GM12878 (cell line): ENCODE measurements at regions of chr3 and their contacts with region 1.

Region 1: GRCh38 chr3:23239211-23240068 is 36.3 kb downstream of the UBE2E2 start:
- DNase-seq: no peak
- ATAC-seq: no peak
- H3K4me3 ChIP-seq: no peak overlapping the region
- H3K27ac ChIP-seq: no peak overlapping the region
- H3K4me1 ChIP-seq: no peaks in the 10 kb centered on the region
- H3K27me3 ChIP-seq: no peaks in the 10 kb centered on the region
- CTCF ChIP-seq: no peak
- EP300 ChIP-seq: no peak
- POLR2A ChIP-seq: no peak
- RAD21 ChIP-seq: no peak

Region 2: DNA sequence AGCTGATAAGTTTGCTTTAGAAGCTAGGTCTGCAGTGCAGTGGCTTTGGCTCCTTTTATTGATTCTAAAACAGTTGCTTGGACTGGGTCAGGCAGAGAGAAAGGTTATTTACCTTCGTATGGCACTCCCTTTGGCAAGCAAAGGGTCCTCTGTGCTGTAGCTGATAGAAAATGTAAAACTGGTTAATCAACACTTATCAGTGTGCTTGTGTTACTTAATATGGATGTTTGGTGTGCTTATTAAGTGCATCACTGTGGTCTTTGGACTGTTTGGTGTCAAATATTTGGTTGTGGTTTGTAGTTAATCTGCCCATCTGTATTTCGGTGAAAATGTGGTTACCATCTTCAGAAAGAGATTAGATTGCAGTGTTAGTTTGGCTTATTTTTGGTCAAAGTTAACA is 20.3 kb before region 1 on chr3:
- CTCF ChIA-PET with region 1: interaction called, 6 read pairs
- POLR2A ChIA-PET with region 1: no interaction called
- RAD21 ChIA-PET with region 1: no interaction called
- SMC1A ChIA-PET with region 1: interaction called, 23 read pairs
- in situ Hi-C with region 1: no loop called
- intact Hi-C with region 1: no loop called
- DNase-seq: no peak
- ATAC-seq: peak; percentile 70
- H3K4me3 ChIP-seq: no peak overlapping the region
- H3K27ac ChIP-seq: peak overlapping the region; percentile 41; the same call in 1 of the 2 replicates
- H3K4me1 ChIP-seq: peaks cover 36% of the 10 kb centered on the region
- H3K27me3 ChIP-seq: no peaks in the 10 kb centered on the region
- CTCF ChIP-seq: no peak
- EP300 ChIP-seq: no peak
- POLR2A ChIP-seq: no peak
- RAD21 ChIP-seq: no peak

Region 3: GRCh38 chr3:23253214-23253613 is 13.8 kb after region 1 on chr3:
- CTCF ChIA-PET with region 1: interaction called, 11 read pairs
- POLR2A ChIA-PET with region 1: interaction called, 7 read pairs
- RAD21 ChIA-PET with region 1: interaction called, 3 read pairs
- SMC1A ChIA-PET with region 1: interaction called, 11 read pairs
- in situ Hi-C with region 1: no loop called
- intact Hi-C with region 1: no loop called
- DNase-seq: peak; percentile 48
- ATAC-seq: peak; percentile 89
- H3K4me3 ChIP-seq: 0 out of 2 replicates have a peak overlapping the region, but pooled peaks have one; percentile 15
- H3K27ac ChIP-seq: peak overlapping the region; percentile 20; the same call in 1 of the 2 replicates
- H3K4me1 ChIP-seq: peaks cover 7% of the 10 kb centered on the region; the same call in 1 of the 2 replicates
- H3K27me3 ChIP-seq: no peaks in the 10 kb centered on the region
- CTCF ChIP-seq: no peak
- EP300 ChIP-seq: no peak
- POLR2A ChIP-seq: no peak
- RAD21 ChIP-seq: no peak

Region 4: GRCh38 chr3:23444386-23444785 is 204.9 kb after region 1 on chr3:
- CTCF ChIA-PET with region 1: no interaction called
- POLR2A ChIA-PET with region 1: no interaction called
- RAD21 ChIA-PET with region 1: no interaction called
- SMC1A ChIA-PET with region 1: no interaction called
- in situ Hi-C with region 1: no loop called
- intact Hi-C with region 1: no loop called
- DNase-seq: no peak
- ATAC-seq: no peak
- H3K4me3 ChIP-seq: no peak overlapping the region
- H3K27ac ChIP-seq: no peak overlapping the region
- H3K4me1 ChIP-seq: peaks cover 14% of the 10 kb centered on the region
- H3K27me3 ChIP-seq: no peaks in the 10 kb centered on the region
- CTCF ChIP-seq: 0 out of 6 replicates have a peak, but pooled peaks of 1 of the 3 experiments have one; percentile 2
- EP300 ChIP-seq: no peak
- POLR2A ChIP-seq: no peak
- RAD21 ChIP-seq: peak; percentile 43; the same call in 1 of the 2 replicates